Activated naive CD4-positive, alpha-beta T cell treated with anti-CD3 and anti-CD28 coated beads, Interleukin-2, amount 10 ng/mL, durations not matched to agents 7 days and 5 days (primary cell): ENCODE measurements at regions of chr1 and their contacts with region 1.

Region 1: DNA sequence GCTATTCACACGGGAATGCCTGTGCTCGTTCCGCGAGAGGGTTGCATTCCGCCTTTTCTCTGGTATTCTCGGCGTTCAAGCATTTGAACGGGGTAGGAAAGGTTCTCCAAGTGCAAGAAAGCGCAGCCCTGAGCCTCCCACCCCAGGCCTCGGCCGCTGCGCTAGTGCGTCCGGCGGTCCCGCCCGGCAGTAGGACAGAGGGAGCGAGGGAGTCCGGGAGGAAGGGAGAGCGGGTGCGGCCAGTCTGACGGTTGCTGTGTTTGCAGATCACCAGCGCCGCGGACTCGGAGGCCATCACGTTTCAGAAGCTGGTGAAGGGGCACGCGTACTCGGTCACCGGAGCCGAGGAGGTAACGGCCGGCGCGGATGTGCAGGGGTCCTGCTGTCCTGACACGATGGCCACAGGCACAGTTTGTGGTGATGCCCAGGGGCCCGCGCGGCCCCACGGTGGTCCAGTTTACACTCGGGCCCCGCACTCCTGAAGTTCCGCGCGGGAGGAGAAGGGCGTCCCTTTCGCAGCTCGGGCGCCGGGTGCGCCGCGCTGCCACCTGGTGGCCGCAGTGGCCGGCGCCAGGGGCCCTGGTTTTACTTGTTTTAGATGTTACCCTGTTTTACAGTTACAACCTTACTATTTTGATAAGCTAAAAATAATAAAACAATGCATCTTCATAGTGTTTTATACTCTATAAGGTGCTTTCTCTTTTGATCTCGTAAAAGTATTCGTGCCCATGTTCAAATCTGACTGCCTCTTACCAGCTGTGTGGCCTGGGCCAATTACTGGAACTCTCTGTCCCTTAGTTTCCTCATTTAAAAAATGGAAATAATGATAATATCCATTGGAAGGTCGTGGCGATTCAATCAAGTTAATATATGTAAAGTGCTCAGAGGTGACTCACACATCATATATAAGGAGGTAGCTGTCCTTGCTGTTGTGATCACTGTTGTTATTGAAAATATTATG is 36.7 kb downstream of the CAPN2 start:
- DNase-seq: peak; percentile 72
- H3K4me3 Mint-ChIP-seq: peak overlapping the region; percentile 67
- H3K27ac Mint-ChIP-seq: peak overlapping the region; percentile 60
- H3K4me1 Mint-ChIP-seq: peaks cover 14% of the 10 kb centered on the region
- H3K27me3 Mint-ChIP-seq: no peaks in the 10 kb centered on the region

Region 2: GRCh38 chr1:223525957-223526356 is 223.1 kb before region 1 on chr1:
- CTCF ChIA-PET with region 1: no interaction called
- DNase-seq: no peak
- H3K4me3 Mint-ChIP-seq: no peak overlapping the region
- H3K27ac Mint-ChIP-seq: no peak overlapping the region
- H3K4me1 Mint-ChIP-seq: peaks cover 5% of the 10 kb centered on the region
- H3K27me3 Mint-ChIP-seq: peaks cover 19% of the 10 kb centered on the region

Region 3: GRCh38 chr1:223652436-223652941 is 96.6 kb before region 1 on chr1:
- CTCF ChIA-PET with region 1: no interaction called
- DNase-seq: no peak
- H3K4me3 Mint-ChIP-seq: no peak overlapping the region
- H3K27ac Mint-ChIP-seq: no peak overlapping the region
- H3K4me1 Mint-ChIP-seq: no peaks in the 10 kb centered on the region
- H3K27me3 Mint-ChIP-seq: peaks cover 23% of the 10 kb centered on the region

Region 4: GRCh38 chr1:223695941-223696340 is 53.1 kb before region 1 on chr1:
- CTCF ChIA-PET with region 1: interaction called, 62 read pairs
- DNase-seq: no peak
- H3K4me3 Mint-ChIP-seq: no peak overlapping the region
- H3K27ac Mint-ChIP-seq: no peak overlapping the region
- H3K4me1 Mint-ChIP-seq: peaks cover 10% of the 10 kb centered on the region
- H3K27me3 Mint-ChIP-seq: peaks cover 9% of the 10 kb centered on the region

Region 5: GRCh38 chr1:223700942-223701637 is 48.0 kb before region 1 on chr1:
- CTCF ChIA-PET with region 1: interaction called, 62 read pairs
- DNase-seq: no peak
- H3K4me3 Mint-ChIP-seq: no peak overlapping the region
- H3K27ac Mint-ChIP-seq: no peak overlapping the region
- H3K4me1 Mint-ChIP-seq: peaks cover 10% of the 10 kb centered on the region
- H3K27me3 Mint-ChIP-seq: peaks cover 13% of the 10 kb centered on the region

Region 6: GRCh38 chr1:223712194-223712849 is 36.7 kb before region 1 on chr1 and contains the start of gene CAPN2:
- CTCF ChIA-PET with region 1: interaction called, 71 read pairs
- DNase-seq: peak; percentile 68
- H3K4me3 Mint-ChIP-seq: peak within 1 kb of the TSS; percentile 76
- H3K27ac Mint-ChIP-seq: peak within 1 kb of the TSS; percentile 82
- H3K4me1 Mint-ChIP-seq: peaks cover 67% of the 10 kb centered on the region
- H3K27me3 Mint-ChIP-seq: peaks cover 19% of the 10 kb centered on the region

Region 7: GRCh38 chr1:223726380-223727001 is 22.6 kb before region 1 on chr1:
- CTCF ChIA-PET with region 1: interaction called, 16 read pairs
- DNase-seq: peak; percentile 89
- H3K4me3 Mint-ChIP-seq: peak overlapping the region; percentile 72
- H3K27ac Mint-ChIP-seq: peak overlapping the region; percentile 92
- H3K4me1 Mint-ChIP-seq: peaks cover 68% of the 10 kb centered on the region
- H3K27me3 Mint-ChIP-seq: no peaks in the 10 kb centered on the region

Region 8: DNA sequence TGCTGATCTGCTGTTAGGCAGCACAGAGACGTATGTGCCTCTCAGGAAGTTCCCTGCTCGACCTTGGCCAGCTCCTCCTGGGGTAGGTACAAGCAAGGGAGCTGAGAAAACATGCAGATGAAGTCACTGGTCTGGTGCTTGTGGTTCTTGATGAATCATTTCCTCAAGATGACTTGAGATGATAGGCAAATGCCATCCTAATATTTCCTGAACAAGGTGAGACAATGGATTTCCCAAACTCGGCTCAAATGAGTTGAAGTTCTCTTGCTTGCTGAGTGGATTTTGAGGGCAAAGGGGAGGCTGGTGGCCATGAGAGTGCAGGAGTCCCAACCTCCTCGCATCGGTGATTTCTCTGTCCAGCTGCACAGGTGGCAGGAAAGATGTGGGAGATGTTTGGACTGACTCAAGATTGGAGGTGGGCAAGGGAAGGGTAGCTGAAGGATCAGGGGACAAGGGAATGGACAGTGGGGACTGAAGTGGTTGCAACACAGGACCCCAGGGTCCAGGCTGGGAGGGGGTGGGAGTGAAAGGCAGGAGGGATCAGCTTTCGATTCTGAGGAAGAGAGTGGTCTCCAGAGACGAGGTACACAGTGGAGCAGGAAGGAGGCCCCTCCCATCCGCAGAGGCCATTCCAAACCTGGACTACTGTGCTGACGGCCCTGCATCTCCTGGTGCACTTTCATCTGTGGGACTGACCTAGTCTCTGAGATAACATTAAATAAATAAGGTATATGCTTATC is 27.2 kb after region 1 on chr1:
- CTCF ChIA-PET with region 1: interaction called, 10 read pairs
- DNase-seq: peak; percentile 40
- H3K4me3 Mint-ChIP-seq: no peak overlapping the region
- H3K27ac Mint-ChIP-seq: peak overlapping the region; percentile 83
- H3K4me1 Mint-ChIP-seq: peaks cover 28% of the 10 kb centered on the region
- H3K27me3 Mint-ChIP-seq: no peaks in the 10 kb centered on the region